ENCODE measurements at regions of chr3 and their contacts with region 1.

Region 1: GRCh38 chr3:48400824-48401433 is 28.9 kb downstream of the FBXW12 start:
- DNase-seq: no peak
- H3K4me3 ChIP-seq: no peak overlapping the region
- CTCF ChIP-seq: peak; percentile 64

Region 2: GRCh38 chr3:47954567-47954966 is 446.4 kb before region 1 on chr3:
- CTCF ChIA-PET with region 1: no interaction called
- POLR2A ChIA-PET with region 1: no interaction called
- DNase-seq: no peak
- H3K4me3 ChIP-seq: no peak overlapping the region
- CTCF ChIP-seq: no peak

Region 3: GRCh38 chr3:48285132-48285531 is 115.8 kb before region 1 on chr3:
- CTCF ChIA-PET with region 1: interaction called, 13 read pairs
- POLR2A ChIA-PET with region 1: no interaction called
- DNase-seq: peak; percentile 21
- H3K4me3 ChIP-seq: no peak overlapping the region
- CTCF ChIP-seq: no peak

Region 4: DNA sequence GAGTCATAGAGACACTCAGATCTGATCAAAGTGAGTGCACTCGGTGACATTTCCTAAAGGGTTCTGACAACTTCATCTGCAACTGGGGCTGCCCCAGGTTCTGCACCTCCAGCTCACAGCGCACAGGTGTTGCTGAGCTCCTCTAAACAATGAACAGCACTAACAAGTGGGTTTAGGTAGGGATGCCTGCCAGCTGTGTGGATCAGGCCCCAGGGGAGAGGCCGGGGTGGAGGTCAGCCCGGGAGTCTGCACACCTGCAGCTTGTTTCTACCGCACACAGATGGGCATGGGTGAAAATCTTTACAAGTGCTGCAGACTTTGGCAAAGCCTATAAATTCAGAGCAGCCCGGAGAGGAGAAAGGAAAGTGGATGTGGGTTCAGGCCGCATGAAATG is 28.6 kb before region 1 on chr3:
- CTCF ChIA-PET with region 1: interaction called, 14 read pairs
- POLR2A ChIA-PET with region 1: no interaction called
- DNase-seq: no peak
- H3K4me3 ChIP-seq: no peak overlapping the region
- CTCF ChIP-seq: no peak

Region 5: GRCh38 chr3:48415554-48415953 is 14.6 kb after region 1 on chr3:
- CTCF ChIA-PET with region 1: interaction called, 46 read pairs
- POLR2A ChIA-PET with region 1: no interaction called
- DNase-seq: no peak
- H3K4me3 ChIP-seq: no peak overlapping the region
- CTCF ChIP-seq: no peak

Region 6: GRCh38 chr3:48548729-48549705 is 148.1 kb after region 1 on chr3:
- CTCF ChIA-PET with region 1: interaction called, 56 read pairs
- POLR2A ChIA-PET with region 1: no interaction called
- DNase-seq: no peak
- H3K4me3 ChIP-seq: no peak overlapping the region
- CTCF ChIP-seq: peak; percentile 95

Measured in AG04449 (cell line).